Adrenal gland (tissue), 19 donors: ENCODE measurements at regions of chr5 and their contacts with region 1.

Region 1: DNA sequence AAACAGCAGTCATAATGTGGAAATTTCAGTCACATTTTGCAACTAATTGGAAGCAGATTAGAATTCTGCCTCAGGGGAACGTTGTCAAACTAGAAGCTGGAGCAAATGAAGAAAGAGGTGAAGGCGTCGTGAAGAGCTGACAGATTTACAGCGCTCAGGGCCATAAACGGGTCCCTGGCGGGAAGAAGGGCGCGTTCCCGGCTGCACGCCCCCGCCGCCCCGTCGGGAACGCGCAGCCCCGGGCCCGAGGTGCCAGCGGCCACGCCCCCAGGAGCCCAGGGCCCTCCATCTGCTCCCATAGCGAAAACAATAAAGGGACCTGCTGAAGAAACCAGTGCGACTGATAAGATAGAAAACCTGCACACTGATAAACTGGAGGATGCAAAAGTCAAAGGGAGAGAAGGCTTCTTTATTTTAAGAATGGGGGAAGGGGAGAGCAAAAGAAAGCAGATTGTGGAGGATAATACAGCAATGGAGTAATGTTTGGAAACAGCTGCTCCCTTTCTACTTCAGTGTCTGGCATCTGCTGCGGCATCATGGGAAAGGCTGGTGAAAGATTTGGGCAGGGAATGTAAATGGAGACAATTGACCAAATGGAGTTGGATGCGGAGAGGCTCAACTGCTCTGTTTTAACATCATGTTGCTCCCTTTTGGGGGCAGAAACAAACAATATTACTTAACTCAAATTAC is 11.1 kb downstream of the ZNF608 start:
- DNase-seq: no peak
- H3K4me3 ChIP-seq: peak overlapping the region in 1 of 4 donors; percentile 38
- H3K27ac ChIP-seq: peak overlapping the region in 1 of 5 donors; percentile 27
- H3K4me1 ChIP-seq: peaks cover 0 to 78% of the 10 kb centered on the region in 2 donors
- H3K27me3 ChIP-seq: no peaks in the 10 kb centered on the region
- CTCF ChIP-seq: no peak
- POLR2A ChIP-seq: no peak

Region 2: GRCh38 chr5:124056991-124057723 is 678.2 kb before region 1 on chr5:
- intact Hi-C with region 1: no loop called
- DNase-seq: peak in 6 of 7 donors; percentile 14 to 26 (median 24)
- H3K4me3 ChIP-seq: peak overlapping the region in 1 of 4 donors; percentile 28
- H3K27ac ChIP-seq: no peak overlapping the region
- H3K4me1 ChIP-seq: peaks cover 19 to 26% of the 10 kb centered on the region in 2 donors
- H3K27me3 ChIP-seq: no peaks in the 10 kb centered on the region
- CTCF ChIP-seq: no peak
- POLR2A ChIP-seq: no peak

Region 3: DNA sequence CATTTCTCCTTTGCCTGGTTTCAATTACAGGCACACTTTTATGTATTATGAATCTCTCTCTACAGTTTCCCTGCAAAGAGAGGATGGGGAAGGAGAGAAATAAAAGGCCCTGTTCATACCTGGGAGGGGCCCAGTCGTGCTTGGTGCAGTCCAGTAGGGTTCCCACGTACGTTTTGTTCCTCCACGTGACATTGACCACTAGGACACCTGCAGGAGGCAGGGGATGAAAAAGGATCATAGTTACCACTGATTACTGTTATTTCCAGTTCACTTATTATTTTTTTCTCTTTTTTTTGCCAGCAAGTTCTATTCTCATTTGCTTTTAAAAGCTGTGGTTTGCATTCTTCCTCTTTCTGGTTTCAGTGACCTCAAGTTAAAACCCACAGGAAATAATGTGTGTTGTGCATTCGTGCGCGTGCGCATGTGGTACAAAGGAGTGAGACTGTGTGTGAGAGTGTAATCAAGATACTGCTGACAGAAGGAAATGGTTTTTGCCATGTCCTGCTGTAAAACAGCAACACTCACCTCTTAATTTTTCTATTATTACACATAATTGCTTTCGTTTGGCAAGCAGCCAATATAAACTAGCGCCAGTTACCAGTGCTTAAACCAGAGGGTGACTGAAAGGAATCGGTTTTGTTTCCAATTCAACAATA is 85.7 kb before region 1 on chr5:
- intact Hi-C with region 1: loop called in 1 of 2 experiments (anchors 10 kb)
- DNase-seq: peak; percentile 44 to 86 (median 63)
- H3K4me3 ChIP-seq: peak overlapping the region in 1 of 4 donors; percentile 29
- H3K27ac ChIP-seq: peak overlapping the region in 2 of 5 donors; percentile 15 to 22
- H3K4me1 ChIP-seq: peaks cover 13 to 37% of the 10 kb centered on the region in 2 donors
- H3K27me3 ChIP-seq: no peaks in the 10 kb centered on the region
- CTCF ChIP-seq: no peak
- POLR2A ChIP-seq: no peak